Vagina (tissue), 2 donors: ENCODE measurements at regions of chr15 and their contacts with region 1.

Region 1: DNA sequence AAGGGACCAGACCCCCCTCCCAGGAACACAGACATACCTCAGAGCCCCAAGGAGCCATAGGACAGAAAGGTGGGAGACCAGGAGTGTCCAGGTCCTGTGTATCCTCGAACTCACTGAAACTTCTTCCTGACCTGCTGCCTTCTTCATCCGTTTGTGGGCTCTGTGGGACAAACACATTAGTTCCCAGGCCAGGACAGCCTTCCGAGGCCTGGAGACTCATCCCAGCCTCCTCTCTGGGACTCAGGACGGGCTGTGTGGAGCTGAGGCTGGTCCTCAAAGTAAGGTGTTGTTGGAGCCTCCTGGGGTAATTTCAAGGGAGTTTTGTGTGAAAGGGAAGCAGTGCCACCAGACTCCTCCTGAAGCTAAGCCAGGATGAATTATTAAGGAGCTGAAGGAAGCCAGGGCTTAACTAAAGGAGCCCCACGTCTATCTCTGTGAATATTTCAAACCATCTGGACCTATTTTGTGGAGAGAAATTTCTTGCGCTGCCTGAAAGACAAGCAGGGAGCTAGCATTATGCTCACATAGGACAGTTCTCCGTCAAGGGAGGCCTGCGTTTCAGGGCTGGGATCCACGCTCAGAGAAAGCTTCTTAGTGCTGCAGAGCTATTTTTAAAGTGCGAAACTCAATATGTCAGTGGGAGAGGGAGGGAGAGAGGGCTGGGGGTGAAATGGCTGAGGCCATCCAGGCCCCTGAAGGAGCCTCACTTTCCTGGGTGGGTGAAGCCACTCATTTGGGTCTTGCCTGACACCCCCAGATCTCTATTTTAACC is 29.8 kb upstream of the PLA2G4E start:
- DNase-seq: peak in 1 of 2 donors; percentile 62
- H3K4me3 ChIP-seq: no peak overlapping the region
- H3K27ac ChIP-seq: no peak overlapping the region
- H3K4me1 ChIP-seq: no peaks in the 10 kb centered on the region
- H3K27me3 ChIP-seq: no peaks in the 10 kb centered on the region
- CTCF ChIP-seq: no peak
- POLR2A ChIP-seq: no peak

Region 2: DNA sequence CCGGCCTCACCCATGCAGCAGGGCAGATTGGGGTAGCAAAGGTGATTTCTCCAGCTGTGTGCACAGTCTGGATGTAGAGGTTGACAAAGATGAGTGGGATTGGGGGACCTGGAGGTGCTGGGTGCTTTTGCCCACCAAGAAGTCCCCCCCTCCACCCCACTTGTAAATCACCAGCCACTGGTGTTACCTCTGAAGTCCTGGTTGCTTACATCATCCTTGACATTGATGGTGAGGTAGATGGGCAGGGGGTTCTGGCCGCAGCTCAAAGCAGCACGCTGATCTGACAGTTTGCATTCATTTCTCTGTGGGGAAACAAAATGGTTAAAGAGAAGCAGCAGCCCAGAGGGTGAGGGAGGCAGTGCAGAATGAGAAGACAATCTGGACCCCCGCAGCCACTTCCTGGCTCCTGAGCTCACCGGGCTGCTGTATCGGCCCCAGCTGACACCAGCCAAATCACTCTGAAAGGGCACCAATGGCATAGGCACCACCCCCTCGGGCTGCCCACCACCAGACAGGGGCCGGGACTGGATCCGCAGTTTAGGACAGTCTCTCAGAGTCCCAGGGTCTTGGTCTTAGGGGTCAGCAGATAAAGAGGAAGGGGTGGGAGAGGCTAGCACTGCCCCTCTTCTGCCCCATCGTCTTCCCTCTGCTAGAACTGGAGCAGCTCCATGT is 60.6 kb before region 1 on chr15:
- intact Hi-C with region 1: loop called (anchors 5 kb)
- DNase-seq: no peak
- H3K4me3 ChIP-seq: no peak overlapping the region
- H3K27ac ChIP-seq: no peak overlapping the region
- H3K4me1 ChIP-seq: no peaks in the 10 kb centered on the region
- H3K27me3 ChIP-seq: no peaks in the 10 kb centered on the region
- CTCF ChIP-seq: no peak
- POLR2A ChIP-seq: no peak